ENCODE measurements at regions of chr11 and their contacts with region 1.

Region 1: DNA sequence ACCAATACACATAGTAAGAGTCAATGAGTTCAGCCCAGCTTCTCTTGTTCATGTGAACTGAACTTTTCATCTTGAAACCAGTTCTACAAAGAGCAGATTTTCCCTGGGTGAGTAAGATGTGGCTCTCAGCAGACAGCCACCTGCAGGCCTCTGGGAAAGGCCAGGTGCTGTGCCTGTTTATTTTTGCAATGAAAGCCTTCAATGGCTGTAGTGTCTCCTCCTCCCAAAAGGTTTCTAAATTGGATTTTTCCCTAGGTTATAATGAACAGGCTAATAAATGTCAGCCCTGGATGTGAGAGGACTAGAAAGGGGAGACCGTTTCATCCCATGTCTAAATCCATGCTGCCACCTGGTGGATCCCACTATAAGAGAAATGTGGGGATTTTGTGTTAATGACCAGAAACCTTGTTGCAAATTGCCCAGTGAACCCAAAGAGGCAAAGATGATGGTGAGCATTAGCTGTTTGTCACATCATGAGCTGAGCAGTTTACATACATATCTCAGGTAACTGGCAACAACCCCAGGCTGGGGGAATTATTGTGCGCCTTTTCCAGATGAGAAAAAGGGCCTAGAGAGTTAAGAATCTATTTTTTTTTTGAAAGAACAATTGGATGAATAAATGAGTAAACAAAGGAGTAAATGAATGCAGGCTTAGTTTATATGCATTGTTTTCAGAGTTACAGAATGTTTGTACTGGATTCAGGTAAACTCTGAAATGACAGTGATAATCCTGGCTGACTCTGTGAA is 12.7 kb downstream of the C11orf91 start:
- DNase-seq: peak; percentile 75
- H3K4me3 Mint-ChIP-seq: no peak overlapping the region
- H3K27ac Mint-ChIP-seq: peak overlapping the region; percentile 92
- H3K4me1 Mint-ChIP-seq: peaks cover 53% of the 10 kb centered on the region
- H3K27me3 Mint-ChIP-seq: no peaks in the 10 kb centered on the region
- CTCF ChIP-seq: peak; percentile 49

Region 2: GRCh38 chr11:33168709-33169200 is 519.2 kb before region 1 on chr11:
- CTCF ChIA-PET with region 1: no interaction called
- intact Hi-C with region 1: loop called (anchors 5 kb)
- DNase-seq: no peak
- H3K4me3 Mint-ChIP-seq: no peak overlapping the region
- H3K27ac Mint-ChIP-seq: no peak overlapping the region
- H3K4me1 Mint-ChIP-seq: peaks cover 6% of the 10 kb centered on the region
- H3K27me3 Mint-ChIP-seq: no peaks in the 10 kb centered on the region
- CTCF ChIP-seq: no peak

Region 3: GRCh38 chr11:33362051-33362910 is 325.6 kb before region 1 on chr11:
- CTCF ChIA-PET with region 1: no interaction called
- intact Hi-C with region 1: loop called (anchors 1 kb)
- DNase-seq: peak; percentile 17
- H3K4me3 Mint-ChIP-seq: no peak overlapping the region
- H3K27ac Mint-ChIP-seq: no peak overlapping the region
- H3K4me1 Mint-ChIP-seq: no peaks in the 10 kb centered on the region
- H3K27me3 Mint-ChIP-seq: no peaks in the 10 kb centered on the region
- CTCF ChIP-seq: peak; percentile 54

Region 4: GRCh38 chr11:33700425-33701271 is 12.7 kb after region 1 on chr11 and contains the start of gene C11orf91:
- CTCF ChIA-PET with region 1: interaction called, 54 read pairs
- intact Hi-C with region 1: no loop called
- DNase-seq: peak; percentile 99
- H3K4me3 Mint-ChIP-seq: peak within 1 kb of the TSS; percentile 70
- H3K27ac Mint-ChIP-seq: peak within 1 kb of the TSS; percentile 94
- H3K4me1 Mint-ChIP-seq: peaks cover 88% of the 10 kb centered on the region
- H3K27me3 Mint-ChIP-seq: no peaks in the 10 kb centered on the region
- CTCF ChIP-seq: no peak
- total RNA-seq, gene C11orf91: 5.8 and 7.6 TPM in 2 replicates

Region 5: DNA sequence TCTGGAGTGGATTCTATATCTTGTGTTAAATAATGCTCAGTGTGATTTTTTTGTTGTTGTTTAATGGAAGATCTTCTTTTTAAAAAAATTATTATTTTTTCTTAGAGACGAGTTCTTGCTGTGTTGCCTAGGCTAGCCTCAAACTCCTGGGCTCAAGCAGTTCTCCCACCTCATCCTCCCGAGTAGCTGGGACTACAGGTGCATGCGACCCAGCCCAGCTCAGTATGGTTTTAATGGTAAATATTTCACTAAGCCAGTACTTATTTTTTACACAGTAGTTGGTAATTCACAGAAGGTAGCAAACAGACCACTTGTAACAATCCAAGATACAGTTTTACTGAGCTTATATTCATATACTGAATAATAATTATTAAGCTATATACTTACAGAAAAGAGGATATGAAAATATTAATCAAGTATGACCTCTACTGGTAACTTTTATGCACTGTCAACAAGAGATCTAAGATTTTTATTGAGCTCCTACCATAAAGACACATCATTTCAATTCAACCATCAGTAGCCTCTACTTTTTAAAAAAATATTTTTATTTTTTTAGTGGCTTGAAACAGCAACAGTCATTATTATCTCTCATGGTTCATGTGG is 54.4 kb after region 1 on chr11:
- CTCF ChIA-PET with region 1: interaction called, 40 read pairs
- intact Hi-C with region 1: no loop called
- DNase-seq: no peak
- H3K4me3 Mint-ChIP-seq: no peak overlapping the region
- H3K27ac Mint-ChIP-seq: no peak overlapping the region
- H3K4me1 Mint-ChIP-seq: peaks cover 34% of the 10 kb centered on the region
- H3K27me3 Mint-ChIP-seq: no peaks in the 10 kb centered on the region
- CTCF ChIP-seq: peak; percentile 40

Measured in Calu3 (cell line).